Caco-2 (cell line): ENCODE measurements at regions of chr20 and their contacts with region 1.

Region 1: GRCh38 chr20:8205996-8206395 is 73.9 kb downstream of the PLCB1 start:
- DNase-seq: peak in 1 of 2 experiments; percentile 33
- H3K4me3 ChIP-seq: no peak overlapping the region
- H3K4me3 Mint-ChIP-seq: peak overlapping the region; percentile 54
- H3K27ac Mint-ChIP-seq: peak overlapping the region; percentile 43
- H3K4me1 ChIP-seq: peaks cover 59% of the 10 kb centered on the region
- H3K4me1 Mint-ChIP-seq: peaks cover 49% of the 10 kb centered on the region
- H3K27me3 ChIP-seq: no peaks in the 10 kb centered on the region
- H3K27me3 Mint-ChIP-seq: no peaks in the 10 kb centered on the region
- CTCF ChIP-seq: no peak

Region 2: GRCh38 chr20:8057871-8058270 is 148.1 kb before region 1 on chr20:
- CTCF ChIA-PET with region 1: no interaction called
- POLR2A ChIA-PET with region 1: no interaction called
- intact Hi-C with region 1: no loop called
- DNase-seq: no peak
- H3K4me3 ChIP-seq: no peak overlapping the region
- H3K4me3 Mint-ChIP-seq: no peak overlapping the region
- H3K27ac Mint-ChIP-seq: no peak overlapping the region
- H3K4me1 ChIP-seq: no peaks in the 10 kb centered on the region
- H3K4me1 Mint-ChIP-seq: no peaks in the 10 kb centered on the region
- H3K27me3 ChIP-seq: no peaks in the 10 kb centered on the region
- H3K27me3 Mint-ChIP-seq: no peaks in the 10 kb centered on the region
- CTCF ChIP-seq: no peak

Region 3: GRCh38 chr20:8190043-8190880 is 15.7 kb before region 1 on chr20:
- CTCF ChIA-PET with region 1: no interaction called
- POLR2A ChIA-PET with region 1: no interaction called
- intact Hi-C with region 1: loop called (anchors 1 kb)
- DNase-seq: peak; percentile 42 to 58
- H3K4me3 ChIP-seq: no peak overlapping the region
- H3K4me3 Mint-ChIP-seq: peak overlapping the region; percentile 39
- H3K27ac Mint-ChIP-seq: no peak overlapping the region
- H3K4me1 ChIP-seq: peaks cover 45% of the 10 kb centered on the region
- H3K4me1 Mint-ChIP-seq: peaks cover 28% of the 10 kb centered on the region
- H3K27me3 ChIP-seq: no peaks in the 10 kb centered on the region
- H3K27me3 Mint-ChIP-seq: no peaks in the 10 kb centered on the region
- CTCF ChIP-seq: no peak

Region 4: DNA sequence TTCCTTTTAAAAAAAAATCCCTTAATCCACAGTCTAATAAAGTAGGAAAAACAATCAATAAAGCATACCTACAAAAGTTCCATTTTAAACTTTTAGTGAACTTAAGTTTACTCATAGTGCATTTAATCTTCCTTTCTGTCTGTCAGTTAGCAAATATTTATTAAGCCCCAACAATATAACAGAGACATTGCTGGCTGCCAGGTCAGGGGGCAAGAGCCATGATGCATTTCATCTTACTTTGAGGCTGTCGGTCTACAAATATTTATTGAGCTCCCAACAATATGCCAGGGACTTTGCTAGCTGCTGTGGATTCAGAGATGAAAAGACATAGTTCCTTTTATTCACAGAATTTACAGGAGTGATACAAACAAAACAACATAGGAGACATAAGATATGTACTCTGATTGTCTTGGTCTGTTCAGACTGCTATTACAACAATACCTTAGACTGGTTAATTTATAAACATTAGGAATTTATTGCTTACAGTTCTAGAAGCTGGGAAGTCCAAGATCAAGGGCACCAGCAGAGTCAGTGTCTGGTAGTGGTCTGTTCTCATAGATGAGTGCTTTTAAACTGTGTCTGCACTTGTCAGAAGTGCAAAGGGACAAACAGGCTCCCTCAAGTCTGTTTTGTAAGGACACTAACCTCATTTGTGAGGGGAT is 44.7 kb after region 1 on chr20:
- CTCF ChIA-PET with region 1: no interaction called
- POLR2A ChIA-PET with region 1: no interaction called
- intact Hi-C with region 1: loop called (anchors 1 kb)
- DNase-seq: peak; percentile 73 to 78
- H3K4me3 ChIP-seq: no peak overlapping the region
- H3K4me3 Mint-ChIP-seq: peak overlapping the region; percentile 25
- H3K27ac Mint-ChIP-seq: peak overlapping the region; percentile 31
- H3K4me1 ChIP-seq: peaks cover 31% of the 10 kb centered on the region
- H3K4me1 Mint-ChIP-seq: peaks cover 39% of the 10 kb centered on the region
- H3K27me3 ChIP-seq: no peaks in the 10 kb centered on the region
- H3K27me3 Mint-ChIP-seq: no peaks in the 10 kb centered on the region
- CTCF ChIP-seq: no peak

Region 5: GRCh38 chr20:8260837-8261251 is 54.8 kb after region 1 on chr20:
- CTCF ChIA-PET with region 1: no interaction called
- POLR2A ChIA-PET with region 1: no interaction called
- intact Hi-C with region 1: no loop called
- DNase-seq: no peak
- H3K4me3 ChIP-seq: no peak overlapping the region
- H3K4me3 Mint-ChIP-seq: no peak overlapping the region
- H3K27ac Mint-ChIP-seq: no peak overlapping the region
- H3K4me1 ChIP-seq: 0 out of 2 replicates have a peak, but pooled peaks cover 5% of the 10 kb centered on the region
- H3K4me1 Mint-ChIP-seq: peaks cover 8% of the 10 kb centered on the region
- H3K27me3 ChIP-seq: no peaks in the 10 kb centered on the region
- H3K27me3 Mint-ChIP-seq: no peaks in the 10 kb centered on the region
- CTCF ChIP-seq: no peak

Region 6: DNA sequence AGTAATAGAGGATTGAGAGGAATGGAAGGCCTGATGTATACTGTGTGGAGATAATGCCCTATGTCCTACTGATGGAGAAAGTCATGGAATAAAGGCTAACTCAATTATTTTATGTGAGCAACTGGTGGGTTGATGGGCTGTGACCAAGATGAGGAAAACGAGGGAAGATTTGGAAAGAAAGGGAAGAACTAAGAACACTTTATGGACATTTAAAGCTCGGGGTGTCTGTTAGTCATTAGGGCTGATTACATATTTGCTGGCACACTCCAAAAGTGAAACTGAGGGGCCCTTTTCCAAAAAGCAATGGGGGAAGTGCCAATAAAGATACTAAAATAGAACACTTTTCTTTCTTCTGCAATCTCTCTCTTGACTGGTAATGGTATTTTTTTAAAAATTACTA is 365.6 kb after region 1 on chr20:
- CTCF ChIA-PET with region 1: no interaction called
- POLR2A ChIA-PET with region 1: no interaction called
- intact Hi-C with region 1: no loop called
- DNase-seq: no peak
- H3K4me3 ChIP-seq: no peak overlapping the region
- H3K4me3 Mint-ChIP-seq: no peak overlapping the region
- H3K27ac Mint-ChIP-seq: no peak overlapping the region
- H3K4me1 ChIP-seq: no peaks in the 10 kb centered on the region
- H3K4me1 Mint-ChIP-seq: no peaks in the 10 kb centered on the region
- H3K27me3 ChIP-seq: no peaks in the 10 kb centered on the region
- H3K27me3 Mint-ChIP-seq: no peaks in the 10 kb centered on the region
- CTCF ChIP-seq: no peak